Activated CD8-positive, alpha-beta T cell treated with anti-CD3 and anti-CD28 coated beads for 36 hours (primary cell): ENCODE measurements at regions of chr18 and their contacts with region 1.

Region 1: GRCh38 chr18:56702946-56703345 is 51.8 kb downstream of the WDR7 start:
- DNase-seq: peak; percentile 39
- ATAC-seq: peak; percentile 39
- H3K4me3 Mint-ChIP-seq: no peak overlapping the region
- H3K27ac Mint-ChIP-seq: no peak overlapping the region
- H3K4me1 Mint-ChIP-seq: peaks cover 2% of the 10 kb centered on the region
- H3K27me3 Mint-ChIP-seq: no peaks in the 10 kb centered on the region
- CTCF ChIP-seq: peak; percentile 59

Region 2: GRCh38 chr18:56489893-56490292 is 213.1 kb before region 1 on chr18:
- CTCF ChIA-PET with region 1: no interaction called
- POLR2A ChIA-PET with region 1: no interaction called
- intact Hi-C with region 1: no loop called
- DNase-seq: no peak
- ATAC-seq: no peak
- H3K4me3 Mint-ChIP-seq: no peak overlapping the region
- H3K27ac Mint-ChIP-seq: no peak overlapping the region
- H3K4me1 Mint-ChIP-seq: no peaks in the 10 kb centered on the region
- H3K27me3 Mint-ChIP-seq: peaks cover 3% of the 10 kb centered on the region
- CTCF ChIP-seq: no peak

Region 3: DNA sequence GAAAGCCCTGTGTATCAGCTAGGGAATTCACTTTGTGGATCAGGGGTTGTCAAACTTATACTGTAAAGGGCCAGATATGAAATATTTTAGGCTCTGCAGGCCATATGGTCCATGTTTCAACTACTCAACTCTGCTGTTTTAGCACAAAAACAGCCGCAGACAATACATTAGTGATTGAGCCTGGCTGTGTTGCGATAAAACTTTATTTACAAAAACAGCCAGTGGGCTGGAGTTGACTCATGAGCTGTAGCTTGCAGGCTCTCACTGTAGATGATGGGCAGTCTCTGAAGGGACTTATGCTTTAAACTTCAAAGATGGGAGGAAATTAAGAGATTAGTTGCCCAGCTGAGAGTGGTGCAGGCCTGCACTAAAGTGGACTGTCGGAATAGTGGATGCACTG is 18.7 kb before region 1 on chr18:
- CTCF ChIA-PET with region 1: interaction called, 21 read pairs
- POLR2A ChIA-PET with region 1: interaction called, 3 read pairs
- intact Hi-C with region 1: no loop called
- DNase-seq: no peak
- ATAC-seq: no peak
- H3K4me3 Mint-ChIP-seq: no peak overlapping the region
- H3K27ac Mint-ChIP-seq: no peak overlapping the region
- H3K4me1 Mint-ChIP-seq: no peaks in the 10 kb centered on the region
- H3K27me3 Mint-ChIP-seq: no peaks in the 10 kb centered on the region
- CTCF ChIP-seq: no peak

Region 4: GRCh38 chr18:57561728-57562423 is 858.9 kb after region 1 on chr18:
- CTCF ChIA-PET with region 1: interaction called, 10 read pairs
- POLR2A ChIA-PET with region 1: no interaction called
- intact Hi-C with region 1: no loop called
- DNase-seq: peak; percentile 15
- ATAC-seq: peak; percentile 66
- H3K4me3 Mint-ChIP-seq: no peak overlapping the region
- H3K27ac Mint-ChIP-seq: no peak overlapping the region
- H3K4me1 Mint-ChIP-seq: peaks cover 2% of the 10 kb centered on the region
- H3K27me3 Mint-ChIP-seq: no peaks in the 10 kb centered on the region
- CTCF ChIP-seq: peak; percentile 94